Psoas muscle (tissue), 8 donors: ENCODE measurements at regions of chr5 and their contacts with region 1.

Region 1: GRCh38 chr5:178461004-178461730 is 129.0 kb downstream of the COL23A1 start:
- DNase-seq: peak; percentile 73 to 86
- ATAC-seq: peak; percentile 88 to 99 (median 98)
- H3K4me3 ChIP-seq: no peak overlapping the region
- H3K27ac ChIP-seq: no peak overlapping the region
- H3K4me1 ChIP-seq: no peaks in the 10 kb centered on the region
- H3K27me3 ChIP-seq: no peaks in the 10 kb centered on the region
- CTCF ChIP-seq: peak; percentile 81

Region 2: GRCh38 chr5:178331399-178331996 is 129.7 kb before region 1 on chr5:
- intact Hi-C with region 1: loop called in 1 of 2 experiments (anchors 5 kb)
- DNase-seq: peak; percentile 82 to 94
- ATAC-seq: peak; percentile 88 to 91 (median 89)
- H3K4me3 ChIP-seq: no peak overlapping the region
- H3K27ac ChIP-seq: peak overlapping the region; percentile 87
- H3K4me1 ChIP-seq: peaks cover 16% of the 10 kb centered on the region
- H3K27me3 ChIP-seq: peaks cover 0 to 2% (median 0%) of the 10 kb centered on the region in 3 donors
- CTCF ChIP-seq: no peak

Region 3: GRCh38 chr5:178551059-178551458 is 89.9 kb after region 1 on chr5:
- intact Hi-C with region 1: loop called in 1 of 2 experiments (anchors 5 kb)
- DNase-seq: no peak
- ATAC-seq: peak; percentile 51 to 83 (median 80)
- H3K4me3 ChIP-seq: no peak overlapping the region
- H3K27ac ChIP-seq: no peak overlapping the region
- H3K4me1 ChIP-seq: peaks cover 5% of the 10 kb centered on the region
- H3K27me3 ChIP-seq: no peaks in the 10 kb centered on the region
- CTCF ChIP-seq: peak; percentile 58

Region 4: DNA sequence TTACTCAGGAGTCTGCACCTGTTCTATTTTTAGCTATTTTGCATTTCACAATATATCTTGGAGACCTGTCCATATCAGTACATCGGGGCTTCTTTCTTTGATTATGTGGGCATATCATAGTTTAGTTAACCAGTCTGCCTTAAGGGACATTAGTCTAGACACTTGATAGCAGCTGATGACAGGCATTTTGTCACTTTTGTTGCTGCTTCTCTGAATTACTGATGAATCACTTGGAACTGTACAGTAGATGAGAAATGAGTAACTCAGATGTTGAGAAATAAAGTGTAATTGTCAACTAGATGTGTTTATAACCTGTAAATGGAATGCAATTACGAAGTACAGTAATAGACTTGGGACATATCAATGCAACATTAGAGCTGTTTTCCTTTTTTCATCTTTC is 441.7 kb after region 1 on chr5:
- intact Hi-C with region 1: no loop called
- DNase-seq: no peak
- ATAC-seq: peak in 2 of 4 donors; percentile 45 to 65
- H3K4me3 ChIP-seq: no peak overlapping the region
- H3K27ac ChIP-seq: no peak overlapping the region
- H3K4me1 ChIP-seq: no peaks in the 10 kb centered on the region
- H3K27me3 ChIP-seq: no peaks in the 10 kb centered on the region
- CTCF ChIP-seq: no peak

Region 5: DNA sequence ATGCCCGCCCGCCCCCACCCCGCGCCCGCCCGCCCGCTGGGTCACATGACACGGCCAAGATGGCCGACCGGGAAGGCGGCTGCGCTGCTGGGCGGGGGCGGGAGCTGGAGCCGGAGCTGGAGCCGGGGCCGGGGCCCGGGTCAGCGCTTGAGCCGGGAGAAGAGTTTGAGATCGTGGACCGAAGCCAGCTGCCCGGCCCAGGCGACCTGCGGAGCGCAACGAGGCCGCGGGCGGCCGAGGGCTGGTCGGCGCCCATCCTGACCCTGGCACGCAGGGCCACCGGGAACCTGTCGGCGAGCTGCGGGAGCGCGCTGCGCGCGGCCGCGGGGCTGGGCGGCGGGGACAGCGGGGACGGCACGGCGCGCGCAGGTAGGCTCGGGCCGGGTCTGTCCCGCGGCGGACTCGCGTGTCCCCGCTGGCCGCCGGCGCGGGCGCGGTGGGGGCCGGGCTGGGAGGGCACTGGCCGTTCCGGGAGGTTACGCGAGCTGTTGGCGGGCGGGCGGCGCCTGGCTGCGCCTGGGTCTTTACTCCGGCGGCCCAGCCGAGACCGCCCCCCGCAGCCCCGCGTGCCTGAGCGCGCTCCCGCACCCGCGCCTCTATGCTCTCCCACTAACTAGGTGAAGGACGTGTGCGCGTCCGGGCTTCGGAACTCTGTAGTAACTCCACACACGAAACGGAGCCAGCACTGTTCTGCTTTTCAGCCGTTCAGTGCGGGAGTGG is 1089.5 kb after region 1 on chr5 and contains the start of gene RUFY1:
- intact Hi-C with region 1: no loop called
- DNase-seq: peak; percentile 86 to 92
- ATAC-seq: peak; percentile 89 to 95 (median 92)
- H3K4me3 ChIP-seq: peak within 1 kb of the TSS; percentile 97
- H3K27ac ChIP-seq: peak within 1 kb of the TSS; percentile 98
- H3K4me1 ChIP-seq: peaks cover 24% of the 10 kb centered on the region
- H3K27me3 ChIP-seq: no peaks in the 10 kb centered on the region
- CTCF ChIP-seq: no peak
- total RNA-seq, gene RUFY1: 17.9 to 26.3 (median 23.2) TPM